Adrenal gland (tissue), 19 donors: ENCODE measurements at regions of chr17 and their contacts with region 1.

Region 1: DNA sequence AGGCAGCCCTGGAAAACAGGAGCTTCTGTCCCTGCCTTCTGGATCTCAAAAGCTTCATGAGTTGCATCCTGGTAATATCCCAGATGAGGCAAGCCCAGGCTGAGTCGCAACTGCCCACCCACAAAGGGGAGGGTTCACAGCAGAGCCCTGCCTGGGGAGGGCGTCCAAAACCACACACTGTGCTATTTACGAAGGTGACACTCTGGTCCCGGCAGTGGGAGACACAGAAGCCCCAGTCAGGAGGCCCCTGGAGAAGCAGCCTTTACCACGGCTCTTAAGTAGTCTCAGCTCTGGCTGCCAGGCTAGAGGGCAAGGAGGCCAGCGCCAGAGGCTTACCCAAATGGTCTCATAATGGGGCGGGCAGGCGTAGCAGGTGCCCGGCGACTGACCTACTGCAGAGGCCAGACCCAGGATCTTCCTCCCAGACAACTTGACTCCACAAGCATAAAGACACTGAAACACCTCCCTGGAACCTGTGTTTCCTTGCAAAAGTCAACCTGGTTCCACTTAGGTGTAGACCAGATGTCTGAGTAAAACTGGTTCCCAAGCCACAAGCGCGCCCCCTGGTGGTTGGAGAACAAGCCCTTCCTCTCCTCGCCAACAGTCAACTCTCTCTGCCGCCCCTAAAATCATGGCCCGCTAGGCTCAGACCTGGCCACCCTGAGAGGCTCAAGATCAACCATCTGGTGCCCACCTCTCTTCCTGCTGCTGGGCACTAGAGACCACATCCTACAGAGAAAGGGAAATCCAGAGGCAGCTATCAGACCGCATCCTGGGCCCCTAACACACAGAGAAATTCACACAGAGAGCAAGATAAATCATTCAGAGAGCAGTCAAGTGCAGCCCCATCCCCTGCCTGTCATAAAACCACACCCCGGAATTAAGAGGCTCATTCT is 5.2 kb downstream of the AXIN2 start:
- DNase-seq: peak; percentile 72 to 90 (median 81)
- H3K4me3 ChIP-seq: no peak overlapping the region
- H3K27ac ChIP-seq: peak overlapping the region in 2 of 5 donors; percentile 7 to 50
- H3K4me1 ChIP-seq: peaks cover 23 to 40% of the 10 kb centered on the region in 2 donors
- H3K27me3 ChIP-seq: no peaks in the 10 kb centered on the region
- CTCF ChIP-seq: peak; percentile 60 to 82 (median 74)
- POLR2A ChIP-seq: no peak

Region 2: DNA sequence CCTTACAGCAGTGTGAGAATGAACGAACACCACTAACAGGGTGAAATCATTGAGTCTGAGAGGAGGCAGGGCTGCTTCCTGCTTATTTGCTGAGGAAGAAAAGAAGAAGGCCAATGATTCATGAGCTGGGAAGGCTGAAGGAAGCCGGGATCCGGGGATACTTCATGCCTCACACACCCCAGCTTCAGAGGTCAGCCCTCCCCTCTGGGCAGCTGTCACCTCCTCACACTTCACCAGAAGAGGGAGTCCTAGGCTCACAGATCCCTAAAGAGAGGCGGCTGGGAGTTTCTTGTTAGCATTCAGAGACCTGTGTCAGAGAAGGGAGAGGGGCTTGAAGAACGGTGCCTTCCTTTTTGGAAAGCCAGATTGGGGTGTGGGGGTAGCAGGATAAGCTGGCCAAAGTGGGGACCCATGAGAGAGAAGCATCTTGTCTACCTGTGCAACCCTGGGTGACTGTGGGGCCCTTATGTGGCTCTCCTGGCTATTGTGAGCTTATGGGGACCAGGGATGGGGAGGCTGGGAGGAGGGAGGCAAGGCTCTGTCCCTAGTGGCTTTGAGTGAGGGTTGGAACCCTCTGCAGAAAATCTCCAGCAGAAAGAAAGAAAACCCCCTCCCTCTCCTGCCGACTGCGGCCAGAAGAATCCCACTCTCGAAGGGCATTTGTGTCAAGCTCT is 324.5 kb before region 1 on chr17:
- intact Hi-C with region 1: loop called in 1 of 2 experiments (anchors 10 kb)
- DNase-seq: peak; percentile 59 to 75 (median 71)
- H3K4me3 ChIP-seq: no peak overlapping the region
- H3K27ac ChIP-seq: no peak overlapping the region
- H3K4me1 ChIP-seq: peaks cover 0 to 18% of the 10 kb centered on the region in 2 donors
- H3K27me3 ChIP-seq: no peaks in the 10 kb centered on the region
- CTCF ChIP-seq: peak; percentile 23 to 77 (median 69)
- POLR2A ChIP-seq: no peak

Region 3: DNA sequence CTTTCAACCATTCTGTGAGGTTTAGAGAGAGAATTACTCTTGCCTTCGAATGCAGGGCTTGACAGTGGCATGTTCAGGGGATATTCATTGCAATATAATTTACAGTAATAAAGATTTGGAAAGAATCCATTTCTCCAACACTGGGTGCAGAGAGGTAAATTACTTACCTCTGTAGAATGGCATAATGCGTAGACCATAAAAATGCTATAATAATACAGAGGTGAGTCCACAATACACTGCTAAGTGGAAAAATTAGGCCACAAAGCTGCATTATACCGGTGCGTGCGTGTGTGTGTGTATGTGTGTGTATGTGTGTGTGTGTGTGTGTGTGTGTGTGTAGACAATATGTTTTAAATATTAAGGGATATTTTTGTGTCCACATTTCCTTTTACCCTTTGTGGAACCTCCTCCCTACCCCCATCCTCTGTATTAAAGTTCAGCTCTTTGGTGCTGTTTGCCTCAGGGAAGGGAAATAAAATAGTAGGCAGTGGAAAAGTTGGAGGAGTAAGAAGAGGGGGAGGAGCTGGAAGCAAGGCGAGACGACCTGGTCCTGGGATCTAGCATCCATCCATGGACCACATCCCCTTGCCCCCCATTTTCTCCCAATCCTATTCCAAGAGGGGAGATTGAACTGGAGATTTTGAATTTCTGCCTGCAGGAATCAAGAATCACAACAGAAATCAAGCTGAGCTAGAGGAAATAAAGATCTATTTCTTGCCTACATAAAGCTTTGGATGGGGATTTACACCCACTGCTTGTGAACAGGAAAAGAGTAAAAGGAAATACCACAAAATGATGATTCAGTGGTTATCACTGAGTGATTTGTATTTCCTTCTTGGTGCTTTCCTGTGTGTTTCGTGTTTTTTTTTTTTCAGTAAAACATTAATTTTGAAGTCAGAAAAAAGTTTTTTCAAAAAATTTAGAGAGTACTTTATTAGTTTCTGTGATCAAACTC is 294.3 kb before region 1 on chr17:
- intact Hi-C with region 1: no loop called
- DNase-seq: no peak
- H3K4me3 ChIP-seq: no peak overlapping the region
- H3K27ac ChIP-seq: no peak overlapping the region
- H3K4me1 ChIP-seq: no peaks in the 10 kb centered on the region
- H3K27me3 ChIP-seq: no peaks in the 10 kb centered on the region
- CTCF ChIP-seq: no peak
- POLR2A ChIP-seq: no peak

Region 4: DNA sequence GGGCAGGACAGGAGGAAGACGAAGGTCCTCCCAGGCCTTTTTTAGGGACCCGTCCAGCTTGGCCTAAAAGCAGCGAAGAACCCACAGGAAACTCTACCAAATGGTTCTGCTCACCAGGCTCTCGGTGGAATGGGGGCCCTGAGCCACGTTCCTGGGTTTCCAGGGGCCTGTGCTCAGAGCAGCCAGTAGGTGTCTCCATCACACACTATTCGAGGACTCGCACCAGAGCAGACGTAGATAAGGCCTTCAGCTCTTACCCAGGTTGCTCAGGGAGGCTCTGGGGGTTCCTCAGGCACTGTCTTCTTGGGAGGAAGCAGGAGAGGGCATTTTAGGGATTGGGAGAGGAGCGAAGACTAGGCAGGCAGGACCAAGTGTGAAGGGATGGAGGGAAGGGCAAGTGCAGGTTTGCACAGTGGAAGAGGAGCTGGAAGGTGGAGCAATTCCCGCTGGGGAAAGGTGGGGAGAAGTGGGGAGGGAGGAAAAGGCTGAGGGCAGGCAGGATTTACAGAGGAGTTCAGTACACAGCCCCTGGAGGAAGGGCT is 262.0 kb before region 1 on chr17:
- intact Hi-C with region 1: loop called (anchors 10 kb)
- DNase-seq: peak; percentile 45 to 84 (median 73)
- H3K4me3 ChIP-seq: no peak overlapping the region
- H3K27ac ChIP-seq: no peak overlapping the region
- H3K4me1 ChIP-seq: no peaks in the 10 kb centered on the region
- H3K27me3 ChIP-seq: no peaks in the 10 kb centered on the region
- CTCF ChIP-seq: peak; percentile 61 to 84 (median 70)
- POLR2A ChIP-seq: no peak

Region 5: DNA sequence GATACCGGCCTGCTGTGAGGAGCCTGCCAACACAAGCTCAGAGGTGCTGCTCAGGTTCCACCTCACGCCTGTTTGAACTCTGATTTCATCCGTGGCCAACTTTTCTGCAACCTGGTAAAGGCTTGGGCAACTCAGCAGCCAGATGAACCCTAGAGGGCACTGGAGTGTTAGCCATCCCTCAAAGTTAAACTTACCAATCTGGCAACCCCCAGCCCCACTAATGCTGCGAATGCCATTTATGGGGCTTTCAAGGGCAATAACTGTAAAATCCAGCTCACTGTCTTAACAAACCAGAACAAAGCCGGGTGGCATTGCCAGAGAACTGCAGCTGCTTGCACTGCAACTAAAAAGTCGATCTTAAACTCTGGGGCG is 100.3 kb before region 1 on chr17:
- intact Hi-C with region 1: no loop called
- DNase-seq: peak in 6 of 7 donors; percentile 20 to 54 (median 35)
- H3K4me3 ChIP-seq: no peak overlapping the region
- H3K27ac ChIP-seq: no peak overlapping the region
- H3K4me1 ChIP-seq: no peaks in the 10 kb centered on the region
- H3K27me3 ChIP-seq: no peaks in the 10 kb centered on the region
- CTCF ChIP-seq: peak in 5 of 6 experiments; percentile 37 to 54 (median 43)
- POLR2A ChIP-seq: no peak